Left cardiac atrium (tissue), 4 donors: ENCODE measurements at regions of chr12 and their contacts with region 1.

Region 1: GRCh38 chr12:121399391-121400331 is at the start of gene RNF34:
- DNase-seq: peak; percentile 99
- ATAC-seq: peak; percentile 98 to 99
- total RNA-seq, gene RNF34: 21.4 to 23.5 TPM

Region 2: DNA sequence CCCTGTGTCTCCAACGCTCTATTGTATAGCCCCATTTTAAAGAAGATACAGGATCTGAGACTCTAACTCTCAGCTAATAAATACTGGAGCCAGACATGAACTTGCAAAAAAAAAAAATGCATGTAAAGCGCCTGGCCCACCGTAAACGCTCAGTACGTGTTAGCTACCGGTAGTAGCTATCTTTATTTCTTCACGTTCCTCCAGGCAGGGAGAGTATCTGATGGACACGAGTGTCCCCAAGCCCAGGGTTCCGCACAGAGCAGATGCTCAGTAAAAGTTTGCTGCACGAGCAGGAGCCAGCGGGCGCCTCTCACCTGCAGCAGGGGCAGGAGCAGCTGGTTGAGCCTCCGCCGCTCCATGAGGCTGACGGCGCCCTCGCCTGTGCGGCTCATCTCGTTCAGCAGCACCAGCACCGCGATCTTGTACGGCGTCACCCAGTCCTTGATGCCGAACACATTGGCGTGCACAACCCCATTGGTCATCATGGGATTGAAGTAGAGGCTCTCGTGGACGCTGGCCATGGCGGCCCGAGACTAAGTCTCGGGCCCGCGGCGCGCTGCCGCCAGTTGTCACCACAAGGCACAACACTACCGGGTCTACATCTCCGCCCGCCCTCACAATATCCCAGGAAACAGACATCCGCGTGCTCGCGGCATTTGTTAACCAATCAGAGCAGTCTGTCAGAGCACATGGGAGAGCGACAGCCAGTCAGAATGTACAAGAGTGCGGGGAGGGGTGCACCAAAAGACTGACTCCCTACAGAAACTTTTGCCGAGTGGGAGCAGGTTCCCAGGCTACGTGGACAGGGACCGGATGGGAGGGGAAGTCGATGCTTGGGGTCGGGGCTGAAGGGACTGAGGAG is 47.6 kb before region 1 on chr12 and contains the start of gene ANAPC5:
- intact Hi-C with region 1: loop called in 1 of 2 experiments (anchors 2 kb)
- DNase-seq: peak; percentile 95
- ATAC-seq: peak; percentile 100
- total RNA-seq, gene ANAPC5: 51.9 to 65.0 TPM